Dendritic cell treated with granulocyte-macrophage colony-stimulating factor and Interleukin-4, amounts not matched to agents 40 ng/mL and 50 ng/mL, for 4 days (primary cell): ENCODE measurements at regions of chr4 and their contacts with region 1.

Region 1: DNA sequence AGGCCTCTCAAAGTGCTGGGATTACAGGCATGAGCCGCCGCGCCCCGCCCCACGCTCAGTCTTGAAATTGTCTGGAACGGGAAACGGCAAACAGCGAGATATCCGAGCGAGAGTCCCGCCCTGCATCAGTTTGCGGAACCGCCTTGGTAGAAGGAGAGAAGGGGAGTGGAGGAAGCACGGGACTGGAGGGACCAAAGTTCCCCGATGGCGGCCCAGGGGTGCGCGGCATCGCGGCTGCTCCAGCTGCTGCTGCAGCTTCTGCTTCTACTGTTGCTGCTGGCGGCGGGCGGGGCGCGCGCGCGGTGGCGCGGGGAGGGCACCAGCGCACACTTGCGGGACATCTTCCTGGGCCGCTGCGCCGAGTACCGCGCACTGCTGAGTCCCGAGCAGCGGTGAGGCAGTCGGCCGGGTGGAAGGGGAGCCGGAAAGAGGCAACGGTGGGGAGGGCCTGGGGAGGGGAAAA is at the start of gene BST1:
- H3K4me3 Mint-ChIP-seq: peak within 1 kb of the TSS; percentile 70
- H3K27ac Mint-ChIP-seq: peak within 1 kb of the TSS; percentile 69
- H3K4me1 Mint-ChIP-seq: peaks cover 34% of the 10 kb centered on the region
- H3K27me3 Mint-ChIP-seq: no peaks in the 10 kb centered on the region

Region 2: GRCh38 chr4:14877246-14878225 is 825.4 kb before region 1 on chr4:
- intact Hi-C with region 1: no loop called
- H3K4me3 Mint-ChIP-seq: no peak overlapping the region
- H3K27ac Mint-ChIP-seq: peak overlapping the region; percentile 26
- H3K4me1 Mint-ChIP-seq: peaks cover 19% of the 10 kb centered on the region
- H3K27me3 Mint-ChIP-seq: no peaks in the 10 kb centered on the region

Region 3: DNA sequence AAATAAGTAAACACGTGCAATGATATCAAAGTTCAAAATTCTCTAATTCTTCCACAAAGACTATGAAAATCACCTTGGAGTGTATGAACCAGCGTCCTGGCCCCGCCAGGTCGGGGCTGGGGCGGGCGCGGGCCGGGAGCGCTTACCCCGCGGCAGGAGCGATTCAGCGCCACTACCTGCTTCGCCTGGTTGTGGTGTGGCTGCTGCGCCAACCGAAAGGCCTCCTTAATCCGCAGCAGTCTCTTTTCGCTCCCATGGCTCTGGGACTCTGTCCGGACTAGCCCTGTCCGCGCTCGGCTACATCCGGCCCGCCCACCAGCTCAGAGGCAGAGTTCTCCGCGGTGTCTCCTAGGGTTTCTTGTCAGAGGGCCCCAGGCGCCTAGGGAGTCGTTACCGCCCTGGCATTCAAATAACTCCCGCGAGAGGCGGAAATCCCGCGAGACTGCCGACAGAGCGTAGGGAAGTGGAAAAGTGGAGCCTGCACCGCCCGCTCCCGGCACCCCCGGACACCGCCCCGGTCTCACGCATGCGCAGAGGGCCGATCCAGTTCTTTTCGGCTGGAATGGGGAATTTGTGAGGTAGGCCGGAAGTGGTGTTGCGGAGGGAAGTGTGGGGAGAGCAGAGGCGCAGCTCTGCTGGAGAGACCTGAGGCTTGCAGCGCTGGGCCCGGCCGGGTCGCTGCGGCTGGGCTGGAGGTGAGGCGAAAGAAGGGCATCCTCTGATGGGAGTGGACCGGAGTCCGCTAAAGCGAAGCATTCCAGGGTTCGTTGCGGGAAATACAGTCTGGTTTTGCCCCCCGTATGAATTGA is 21.6 kb before region 1 on chr4 and contains the start of gene FAM200B:
- intact Hi-C with region 1: loop called (anchors 2 kb)
- H3K4me3 Mint-ChIP-seq: peak within 1 kb of the TSS; percentile 93
- H3K27ac Mint-ChIP-seq: peak within 1 kb of the TSS; percentile 98
- H3K4me1 Mint-ChIP-seq: peaks cover 62% of the 10 kb centered on the region
- H3K27me3 Mint-ChIP-seq: no peaks in the 10 kb centered on the region